ENCODE measurements at regions of chr1 and their contacts with region 1.

Region 1: GRCh38 chr1:26111530-26112406 is at the start of gene PDIK1L:
- DNase-seq: peak; percentile 92
- H3K4me3 Mint-ChIP-seq: peak within 1 kb of the TSS; percentile 91
- H3K27ac Mint-ChIP-seq: peak within 1 kb of the TSS; percentile 90
- H3K4me1 Mint-ChIP-seq: peaks cover 12% of the 10 kb centered on the region
- H3K27me3 Mint-ChIP-seq: no peaks in the 10 kb centered on the region
- CTCF ChIP-seq: no peak
- total RNA-seq, gene PDIK1L: 11.4 and 11.9 TPM in 2 replicates

Region 2: DNA sequence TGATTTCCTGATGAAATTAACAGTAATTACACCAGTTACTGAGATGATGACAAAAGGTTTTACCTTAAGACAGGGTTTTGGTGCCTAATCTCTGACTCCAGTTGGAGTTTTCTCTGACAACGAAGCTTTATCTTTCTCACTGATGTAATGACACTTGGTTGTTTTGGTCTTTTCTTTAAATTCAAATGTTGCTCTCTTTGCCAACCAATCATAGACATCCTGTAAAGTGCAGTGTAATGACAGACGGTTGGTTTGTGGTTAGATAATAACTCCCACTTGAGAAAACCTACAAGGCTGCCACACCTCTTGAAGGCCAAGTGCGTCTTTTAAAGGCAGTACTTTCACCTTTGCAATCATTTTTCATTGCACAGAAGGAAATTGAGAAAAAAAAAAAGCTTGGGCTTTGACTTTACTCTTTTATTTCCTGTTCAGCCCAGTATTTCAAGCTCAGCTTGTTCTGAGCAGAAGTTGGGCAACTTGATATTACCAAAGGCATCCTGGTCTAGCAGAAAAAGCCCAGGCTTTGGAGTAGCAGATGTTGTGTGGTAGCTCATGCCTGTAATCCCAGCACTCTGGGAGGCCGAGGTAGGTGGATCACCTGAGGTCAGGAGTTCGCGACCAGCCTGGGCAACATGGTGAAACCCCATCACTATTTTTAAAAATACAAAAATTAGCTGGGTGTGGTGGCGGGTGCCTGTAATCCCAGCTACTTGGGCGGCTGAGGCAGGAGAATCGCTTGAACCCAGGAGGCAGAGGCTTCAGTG is 14.7 kb after region 1 on chr1:
- CTCF ChIA-PET with region 1: no interaction called
- intact Hi-C with region 1: loop called (anchors 2 kb)
- DNase-seq: peak; percentile 66
- H3K4me3 Mint-ChIP-seq: peak overlapping the region; percentile 50
- H3K27ac Mint-ChIP-seq: peak overlapping the region; percentile 96
- H3K4me1 Mint-ChIP-seq: peaks cover 36% of the 10 kb centered on the region
- H3K27me3 Mint-ChIP-seq: no peaks in the 10 kb centered on the region
- CTCF ChIP-seq: no peak

Region 3: GRCh38 chr1:26161415-26162219 is 49.8 kb after region 1 on chr1:
- CTCF ChIA-PET with region 1: no interaction called
- intact Hi-C with region 1: loop called (anchors 5 kb)
- DNase-seq: peak; percentile 66
- H3K4me3 Mint-ChIP-seq: peak overlapping the region; percentile 67
- H3K27ac Mint-ChIP-seq: peak overlapping the region; percentile 21
- H3K4me1 Mint-ChIP-seq: no peaks in the 10 kb centered on the region
- H3K27me3 Mint-ChIP-seq: peaks cover 13% of the 10 kb centered on the region
- CTCF ChIP-seq: no peak

Region 4: DNA sequence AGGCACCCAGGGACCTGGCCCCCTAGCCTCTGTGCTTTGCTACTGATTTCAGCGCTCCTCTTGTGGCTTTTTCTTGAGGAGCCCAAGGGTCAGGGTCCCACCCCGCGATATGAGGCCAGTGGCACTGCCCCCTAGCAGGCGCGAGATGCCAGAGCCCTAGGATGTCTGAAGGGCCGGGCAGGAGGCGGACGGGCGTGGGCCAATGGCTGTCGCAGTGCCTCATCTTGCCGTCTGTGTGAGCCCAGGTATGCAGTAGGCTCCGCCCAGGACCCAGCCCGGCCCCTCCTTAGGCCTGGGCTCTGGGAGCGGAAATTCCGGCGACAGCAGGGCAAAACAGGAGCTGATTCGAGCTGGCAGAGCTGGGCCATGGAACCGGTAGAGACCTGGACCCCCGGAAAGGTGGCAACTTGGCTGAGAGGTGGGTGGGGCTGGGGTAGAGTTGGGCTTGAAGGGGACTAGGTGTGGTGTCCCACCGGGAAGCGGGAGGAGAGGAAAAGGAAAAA is 65.5 kb after region 1 on chr1 and contains the start of gene CNKSR1:
- CTCF ChIA-PET with region 1: no interaction called
- intact Hi-C with region 1: no loop called
- DNase-seq: peak; percentile 89
- H3K4me3 Mint-ChIP-seq: peak within 1 kb of the TSS; percentile 76
- H3K27ac Mint-ChIP-seq: peak within 1 kb of the TSS; percentile 78
- H3K4me1 Mint-ChIP-seq: peaks cover 11% of the 10 kb centered on the region
- H3K27me3 Mint-ChIP-seq: no peaks in the 10 kb centered on the region
- CTCF ChIP-seq: peak; percentile 39
- total RNA-seq, gene CNKSR1: 28.1 and 30.6 TPM in 2 replicates